ENCODE measurements at regions of chr22 and their contacts with region 1.

Region 1: DNA sequence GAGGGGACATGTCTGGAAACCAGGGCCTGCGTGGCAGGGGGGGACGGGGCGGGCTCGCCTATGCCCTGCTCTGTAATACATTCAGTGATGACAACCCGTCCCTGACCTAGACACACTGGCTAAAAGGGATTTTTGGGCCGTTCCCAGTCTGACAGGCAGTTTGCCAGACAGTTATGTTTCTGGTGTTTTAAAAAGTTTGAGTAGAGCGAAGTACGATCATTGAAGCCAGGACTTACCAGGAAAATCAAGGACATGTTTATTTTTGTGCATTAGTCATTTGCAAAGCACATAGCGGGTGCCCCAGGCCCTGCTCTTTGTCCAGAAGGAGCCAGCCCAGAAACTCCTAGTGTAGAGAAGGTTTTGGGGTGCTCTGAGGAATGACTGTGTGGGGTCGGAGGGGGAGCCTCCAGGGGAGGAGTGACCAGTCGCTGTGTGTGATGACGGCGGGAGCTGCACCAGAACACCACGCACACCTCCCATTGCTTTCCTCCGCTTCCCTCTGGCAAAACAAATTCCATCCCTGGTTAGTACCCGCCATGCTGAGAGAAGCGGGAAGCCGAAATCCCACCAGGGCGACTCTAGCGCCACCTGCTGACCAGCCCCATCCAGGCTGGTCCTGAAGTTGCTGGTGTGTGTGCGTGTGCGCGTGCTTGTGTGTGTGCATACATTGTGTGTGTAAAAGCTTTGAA is 50.8 kb downstream of the FBLN1 start:
- DNase-seq: peak in 5 of 6 donors; percentile 41 to 89 (median 72)
- ATAC-seq: peak; percentile 78 to 80 (median 80)
- H3K4me3 ChIP-seq: no peak overlapping the region
- H3K27ac ChIP-seq: peak overlapping the region in 2 of 4 donors; percentile 22 to 33
- H3K4me1 ChIP-seq: peaks cover 0 to 10% (median 0%) of the 10 kb centered on the region in 3 donors
- H3K27me3 ChIP-seq: no peaks in the 10 kb centered on the region
- CTCF ChIP-seq: peak; percentile 64 to 77 (median 70)

Region 2: DNA sequence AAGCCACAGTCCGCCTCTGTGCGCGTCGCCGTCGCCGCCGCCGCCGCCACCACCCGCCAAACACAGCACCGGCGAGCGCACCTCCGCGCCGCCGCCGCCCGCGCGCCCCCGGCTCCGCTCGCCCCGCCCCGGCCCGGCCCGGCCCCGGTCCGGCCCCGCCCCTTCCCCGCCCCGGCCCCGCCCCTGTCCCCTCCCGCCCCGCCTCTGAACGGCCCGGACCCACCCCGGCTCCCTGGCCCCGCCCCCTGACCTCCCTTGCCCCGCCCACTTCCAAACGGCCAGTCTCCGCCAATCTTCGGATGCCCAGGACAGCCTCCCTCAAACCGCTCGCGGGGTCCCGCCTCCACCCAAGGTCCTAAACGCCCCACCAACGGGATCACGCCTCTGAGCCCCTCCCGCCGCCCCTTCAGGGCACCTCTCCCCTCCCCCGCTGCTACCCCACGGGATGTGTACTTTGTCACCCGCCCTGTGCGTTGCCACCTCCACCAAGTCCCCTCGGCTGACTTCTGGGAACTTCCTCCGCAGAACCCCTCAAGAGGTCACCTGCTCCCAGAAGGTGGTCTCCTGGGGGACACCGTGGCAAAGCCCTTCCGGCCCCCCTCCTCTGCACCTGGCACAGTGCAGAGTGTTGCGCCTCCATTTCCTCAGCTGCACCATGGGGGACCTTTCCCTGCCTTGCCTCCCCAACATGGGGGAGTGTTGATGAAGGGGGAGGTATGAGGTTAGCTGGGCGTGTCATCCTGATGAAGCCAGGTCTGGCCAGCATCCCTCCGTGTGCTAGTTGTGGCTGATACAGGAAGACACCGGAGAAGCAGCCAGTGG is 312.5 kb before region 1 on chr22 and contains the start of gene KIAA0930:
- intact Hi-C with region 1: no loop called
- DNase-seq: peak; percentile 73 to 93 (median 86)
- ATAC-seq: peak; percentile 53 to 71 (median 70)
- H3K4me3 ChIP-seq: peak within 1 kb of the TSS; percentile 44 to 71 (median 62)
- H3K27ac ChIP-seq: peak within 1 kb of the TSS in 2 of 4 donors; percentile 51 to 56
- H3K4me1 ChIP-seq: peaks cover 11 to 17% (median 17%) of the 10 kb centered on the region in 3 donors
- H3K27me3 ChIP-seq: no peaks in the 10 kb centered on the region
- CTCF ChIP-seq: no peak
- total RNA-seq, gene KIAA0930: 14.6 to 36.8 (median 24.1) TPM

Region 3: DNA sequence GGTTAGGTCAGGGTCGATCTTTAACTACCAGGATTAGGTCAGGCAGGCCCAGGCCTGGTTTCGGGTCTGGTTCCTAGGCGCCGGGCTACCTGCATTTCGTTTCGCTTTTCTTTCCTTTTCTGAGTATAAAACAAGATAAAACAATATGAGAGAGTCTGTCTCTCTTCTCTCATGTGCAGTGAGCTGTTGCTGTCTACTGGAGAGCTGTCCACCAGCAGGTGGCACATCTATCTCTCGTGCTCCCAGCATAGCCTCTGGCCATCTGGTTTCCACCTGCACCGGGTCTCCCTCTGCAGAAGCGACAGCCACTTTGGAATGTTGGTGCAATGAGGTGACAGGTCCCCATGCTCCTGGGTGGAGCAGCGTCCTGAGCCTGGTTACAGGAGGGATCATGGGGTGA is 112.4 kb before region 1 on chr22:
- intact Hi-C with region 1: loop called in 1 of 3 experiments (anchors 5 kb)
- DNase-seq: peak in 3 of 6 donors; percentile 18 to 57 (median 33)
- ATAC-seq: peak; percentile 64 to 95 (median 92)
- H3K4me3 ChIP-seq: no peak overlapping the region
- H3K27ac ChIP-seq: no peak overlapping the region
- H3K4me1 ChIP-seq: no peaks in the 10 kb centered on the region
- H3K27me3 ChIP-seq: no peaks in the 10 kb centered on the region
- CTCF ChIP-seq: peak; percentile 11 to 32 (median 27)